ENCODE measurements at regions of chr7 and their contacts with region 1.

Region 1: DNA sequence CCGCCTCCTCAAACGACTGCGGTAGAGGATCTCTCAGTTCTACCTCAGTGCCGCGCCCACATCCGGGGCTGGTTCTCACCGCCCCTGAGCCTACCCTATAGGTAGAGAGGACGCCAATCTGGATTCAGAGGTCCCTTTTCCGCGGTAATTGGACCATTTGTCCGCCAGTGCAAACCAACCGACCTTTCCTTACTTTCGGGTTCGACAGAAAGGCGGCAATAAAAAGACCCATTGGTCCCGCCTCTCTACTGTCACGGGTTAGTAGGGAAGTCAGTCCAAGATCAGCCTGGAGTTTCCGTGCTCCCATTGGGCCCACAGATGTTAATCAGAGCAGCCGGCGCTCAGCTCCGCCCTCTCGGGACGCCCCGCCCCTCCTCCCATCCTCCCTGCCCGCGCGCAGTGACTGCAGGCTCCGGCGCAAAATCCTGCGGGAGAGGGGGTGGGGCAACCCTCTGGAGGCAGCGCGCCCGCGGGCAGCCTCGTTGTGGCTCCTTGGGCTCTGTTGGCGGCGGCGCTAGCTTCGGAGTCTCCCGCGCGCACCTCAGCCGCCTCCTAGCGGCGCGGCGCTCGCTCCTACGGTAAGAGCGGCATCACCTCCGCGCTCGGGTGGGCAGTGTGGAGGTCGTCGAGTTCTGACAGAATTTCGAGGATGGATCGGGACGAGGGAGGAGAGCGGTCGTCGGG is at the starts of genes PHTF2 and TMEM60:
- DNase-seq: peak; percentile 100
- H3K4me3 ChIP-seq: peak within 1 kb of the TSS; percentile 96 to 97 (median 96)
- H3K27ac ChIP-seq: peak within 1 kb of the TSS; percentile 83
- H3K4me1 ChIP-seq: peaks cover 17% of the 10 kb centered on the region
- H3K27me3 ChIP-seq: no peaks in the 10 kb centered on the region
- CTCF ChIP-seq: peak; percentile 43 to 71
- total RNA-seq, gene PHTF2: 19.8 to 26.4 TPM
- total RNA-seq, gene TMEM60: 9.5 to 12.8 TPM

Region 2: GRCh38 chr7:77738871-77739270 is 59.7 kb before region 1 on chr7:
- CTCF ChIA-PET with region 1: no interaction called
- dilution Hi-C with region 1: no loop called
- in situ Hi-C with region 1: loop called in 1 of 2 experiments (anchors 10 kb)
- intact Hi-C with region 1: no loop called
- DNase-seq: no peak
- H3K4me3 ChIP-seq: no peak overlapping the region
- H3K27ac ChIP-seq: no peak overlapping the region
- H3K4me1 ChIP-seq: no peaks in the 10 kb centered on the region
- H3K27me3 ChIP-seq: no peaks in the 10 kb centered on the region
- CTCF ChIP-seq: no peak

Region 3: GRCh38 chr7:77830649-77831355 is 32.3 kb after region 1 on chr7:
- CTCF ChIA-PET with region 1: no interaction called
- dilution Hi-C with region 1: no loop called
- in situ Hi-C with region 1: no loop called
- intact Hi-C with region 1: loop called (anchors 2 kb)
- DNase-seq: no peak
- H3K4me3 ChIP-seq: no peak overlapping the region
- H3K27ac ChIP-seq: no peak overlapping the region
- H3K4me1 ChIP-seq: peaks cover 12% of the 10 kb centered on the region
- H3K27me3 ChIP-seq: no peaks in the 10 kb centered on the region
- CTCF ChIP-seq: no peak

Region 4: DNA sequence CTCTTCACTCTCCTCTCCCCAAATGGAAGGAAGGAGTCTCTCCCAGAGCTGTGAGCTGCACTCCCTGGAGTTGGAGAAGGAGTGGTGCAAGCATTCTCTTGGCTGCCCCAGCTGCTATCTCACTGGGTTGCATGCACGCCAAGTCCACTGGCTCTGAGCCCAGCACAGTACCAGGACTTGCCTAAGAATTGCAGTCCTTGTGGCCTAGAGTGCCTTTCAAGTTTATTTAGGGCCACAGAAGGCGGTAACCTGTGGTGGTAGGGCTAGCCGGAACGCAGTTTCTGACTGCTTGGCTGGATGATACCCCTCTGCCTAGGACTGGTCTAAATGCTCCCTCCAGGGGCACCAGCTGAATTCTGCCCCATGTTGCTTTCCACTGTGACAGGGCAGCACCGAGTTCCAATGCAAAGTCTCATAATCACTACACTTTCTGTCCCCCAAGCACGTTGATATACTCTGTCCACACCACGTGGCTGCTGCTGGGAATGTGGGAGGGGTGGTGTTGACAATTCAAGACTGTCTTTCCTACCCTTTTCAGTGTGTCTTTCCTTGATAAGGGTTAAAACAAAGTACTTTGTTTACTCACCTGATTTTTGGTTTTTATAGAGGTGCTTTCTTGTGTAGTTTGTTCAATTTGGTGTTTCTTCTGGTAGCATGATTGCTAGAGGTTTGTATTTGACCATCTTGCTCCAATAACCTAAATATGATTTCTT is 57.0 kb after region 1 on chr7:
- CTCF ChIA-PET with region 1: no interaction called
- dilution Hi-C with region 1: no loop called
- in situ Hi-C with region 1: no loop called
- intact Hi-C with region 1: no loop called
- DNase-seq: no peak
- H3K4me3 ChIP-seq: no peak overlapping the region
- H3K27ac ChIP-seq: no peak overlapping the region
- H3K4me1 ChIP-seq: no peaks in the 10 kb centered on the region
- H3K27me3 ChIP-seq: no peaks in the 10 kb centered on the region
- CTCF ChIP-seq: no peak

Region 5: DNA sequence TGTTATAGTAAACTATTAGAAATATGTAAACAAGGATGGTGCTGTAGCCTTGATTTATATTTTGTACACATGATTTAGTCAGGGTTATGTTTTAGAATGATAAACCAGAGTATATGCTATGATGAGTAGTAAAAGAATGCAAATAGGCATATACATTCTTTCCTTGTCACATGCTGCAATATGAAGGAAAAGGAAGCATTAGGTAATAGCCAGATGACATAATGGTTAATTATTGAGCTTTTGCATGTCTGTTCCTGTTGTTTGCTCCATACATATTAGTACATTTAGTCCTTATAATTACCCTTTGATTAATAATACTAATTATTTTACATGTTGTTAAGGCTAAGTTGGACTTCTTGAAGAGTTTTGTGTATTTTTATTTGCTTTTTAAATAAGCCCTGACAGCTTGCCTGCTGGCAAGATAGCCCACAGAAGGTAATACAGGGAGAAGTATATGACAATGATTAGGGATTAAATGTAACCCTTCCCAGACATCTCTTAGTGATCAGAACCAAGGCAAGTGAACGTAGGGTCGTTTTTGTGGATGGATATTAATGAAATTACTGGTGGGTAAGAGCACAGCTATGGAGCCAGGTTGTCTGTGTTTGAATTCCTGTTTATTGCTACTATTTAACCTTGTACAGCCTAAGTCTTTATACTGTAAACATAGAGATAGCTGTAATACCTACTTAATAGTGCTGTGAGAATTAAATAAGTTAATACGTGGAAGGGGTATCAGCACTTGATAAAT is 68.4 kb after region 1 on chr7:
- CTCF ChIA-PET with region 1: no interaction called
- dilution Hi-C with region 1: no loop called
- in situ Hi-C with region 1: no loop called
- intact Hi-C with region 1: loop called (anchors 2 kb)
- DNase-seq: peak; percentile 58
- H3K4me3 ChIP-seq: no peak overlapping the region
- H3K27ac ChIP-seq: peak overlapping the region; percentile 36
- H3K4me1 ChIP-seq: peaks cover 18% of the 10 kb centered on the region
- H3K27me3 ChIP-seq: no peaks in the 10 kb centered on the region
- CTCF ChIP-seq: no peak

Region 6: GRCh38 chr7:77903597-77903996 is 105.1 kb after region 1 on chr7:
- CTCF ChIA-PET with region 1: no interaction called
- dilution Hi-C with region 1: no loop called
- in situ Hi-C with region 1: no loop called
- intact Hi-C with region 1: loop called (anchors 1 kb)
- DNase-seq: no peak
- H3K4me3 ChIP-seq: no peak overlapping the region
- H3K27ac ChIP-seq: no peak overlapping the region
- H3K4me1 ChIP-seq: no peaks in the 10 kb centered on the region
- H3K27me3 ChIP-seq: no peaks in the 10 kb centered on the region
- CTCF ChIP-seq: peak; percentile 13 to 49

Region 7: DNA sequence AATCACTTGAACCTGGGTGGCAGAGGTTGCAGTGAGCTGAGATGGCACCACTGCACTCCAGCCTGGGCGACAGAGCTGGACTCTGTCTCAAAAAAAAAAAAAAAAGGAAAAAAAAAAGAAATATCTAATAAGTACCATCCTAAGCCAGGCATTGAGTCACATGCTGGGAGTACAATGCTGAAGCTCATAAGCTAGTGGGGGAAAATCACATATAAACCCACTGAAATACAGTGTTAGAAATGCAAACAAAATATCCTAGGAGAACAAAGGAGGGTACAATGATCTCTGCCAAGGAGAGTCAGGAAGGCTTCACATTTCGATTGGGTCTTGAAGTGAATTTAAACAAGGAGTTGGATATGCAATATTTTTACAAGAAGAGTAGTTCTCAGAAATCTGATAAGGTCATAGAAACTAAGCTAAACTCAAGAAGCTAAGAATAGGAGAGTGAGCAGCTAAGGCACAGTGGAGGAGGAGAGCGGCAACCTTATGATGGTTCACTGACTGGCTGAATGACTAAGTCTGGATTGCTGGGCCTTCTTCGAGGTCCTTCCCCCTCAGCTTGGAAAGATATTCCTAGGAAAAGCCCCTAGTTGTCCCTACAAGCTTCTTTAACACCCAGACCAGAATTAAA is 115.6 kb after region 1 on chr7:
- CTCF ChIA-PET with region 1: no interaction called
- dilution Hi-C with region 1: no loop called
- in situ Hi-C with region 1: no loop called
- intact Hi-C with region 1: no loop called
- DNase-seq: no peak
- H3K4me3 ChIP-seq: no peak overlapping the region
- H3K27ac ChIP-seq: no peak overlapping the region
- H3K4me1 ChIP-seq: no peaks in the 10 kb centered on the region
- H3K27me3 ChIP-seq: no peaks in the 10 kb centered on the region
- CTCF ChIP-seq: no peak